ENCODE measurements at regions of chr3 and their contacts with region 1.

Region 1: DNA sequence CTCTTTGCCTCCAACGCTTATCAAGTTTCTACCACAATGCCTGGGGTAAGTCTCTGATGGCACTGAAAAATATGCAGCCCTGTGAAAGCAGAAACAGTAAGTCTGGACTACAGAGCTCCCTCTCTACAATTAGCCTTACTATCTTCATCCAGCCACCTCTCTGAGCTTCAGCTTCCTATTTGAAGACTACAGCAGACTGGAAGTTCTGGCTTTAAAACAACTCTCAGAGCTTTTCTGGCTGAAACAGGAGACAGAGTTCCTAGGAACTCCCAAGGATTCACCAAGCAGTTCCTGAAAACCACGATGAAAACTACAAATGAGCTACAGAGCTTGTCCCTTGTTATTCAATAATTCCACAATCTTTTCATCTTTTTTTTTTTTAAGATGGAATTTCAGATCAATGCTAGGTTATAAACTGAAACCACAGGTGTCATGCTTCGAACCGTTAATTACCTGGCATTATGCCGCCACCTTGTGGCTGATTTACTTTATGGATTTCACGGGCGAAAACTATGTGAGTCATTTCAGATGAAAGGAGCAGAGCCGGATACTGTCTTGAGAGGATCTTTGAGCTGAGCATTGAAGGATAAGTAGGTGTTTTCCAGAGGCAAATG is 3.9 kb downstream of the CRYGS start:
- DNase-seq: peak; percentile 90
- H3K4me3 Mint-ChIP-seq: no peak overlapping the region
- H3K27ac Mint-ChIP-seq: peak overlapping the region; percentile 25
- H3K4me1 Mint-ChIP-seq: peaks cover 57% of the 10 kb centered on the region
- H3K27me3 Mint-ChIP-seq: no peaks in the 10 kb centered on the region

Region 2: GRCh38 chr3:185976977-185977678 is 563.2 kb before region 1 on chr3:
- CTCF ChIA-PET with region 1: interaction called, 82 read pairs
- POLR2A ChIA-PET with region 1: no interaction called
- intact Hi-C with region 1: loop called (anchors 1 kb)
- DNase-seq: peak; percentile 92
- H3K4me3 Mint-ChIP-seq: no peak overlapping the region
- H3K27ac Mint-ChIP-seq: peak overlapping the region; percentile 23
- H3K4me1 Mint-ChIP-seq: peaks cover 15% of the 10 kb centered on the region
- H3K27me3 Mint-ChIP-seq: no peaks in the 10 kb centered on the region

Region 3: GRCh38 chr3:186241910-186242821 is 298.2 kb before region 1 on chr3:
- CTCF ChIA-PET with region 1: interaction called, 17 read pairs
- POLR2A ChIA-PET with region 1: no interaction called
- intact Hi-C with region 1: no loop called
- DNase-seq: peak; percentile 82
- H3K4me3 Mint-ChIP-seq: no peak overlapping the region
- H3K27ac Mint-ChIP-seq: no peak overlapping the region
- H3K4me1 Mint-ChIP-seq: peaks cover 7% of the 10 kb centered on the region
- H3K27me3 Mint-ChIP-seq: peaks cover 22% of the 10 kb centered on the region

Region 4: DNA sequence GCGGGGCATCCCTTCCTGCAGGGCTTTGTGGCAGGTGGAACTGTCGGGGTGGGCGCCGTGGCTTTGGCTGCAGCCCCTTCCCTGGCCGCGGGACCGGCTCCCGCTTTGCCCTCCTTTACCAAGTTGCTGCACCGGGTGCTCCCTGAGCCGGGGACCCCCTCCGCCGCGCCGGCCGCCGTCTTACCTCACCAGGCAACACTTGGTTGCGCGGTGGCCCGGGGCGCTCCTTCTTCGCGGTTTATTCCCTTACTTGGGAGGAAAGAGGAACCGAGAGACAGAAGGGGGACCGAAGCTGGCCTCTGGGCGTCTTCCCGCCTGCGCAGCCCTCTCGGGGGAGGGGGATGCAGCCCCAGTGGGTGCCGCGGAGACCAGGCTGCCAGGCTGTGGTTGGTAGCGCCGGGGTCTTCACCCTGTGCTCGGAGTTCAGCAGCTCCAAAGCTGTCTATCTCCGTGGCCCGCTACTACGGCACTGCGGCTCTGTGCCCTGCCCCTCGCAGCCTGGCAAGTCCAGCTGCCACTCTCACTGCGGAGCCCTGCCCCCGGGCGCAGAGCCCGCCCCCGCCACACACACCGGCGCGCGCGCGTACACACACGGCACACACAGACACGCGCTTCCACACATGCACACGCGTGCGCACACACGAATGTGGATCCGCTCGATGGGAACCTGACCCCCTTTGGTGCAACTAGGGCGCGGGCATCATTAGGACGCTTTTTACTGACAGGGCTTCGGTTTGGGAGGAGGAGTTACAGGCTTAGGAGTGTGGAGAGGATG is 178.4 kb before region 1 on chr3 and contains the start of gene DGKG:
- CTCF ChIA-PET with region 1: interaction called, 11 read pairs
- POLR2A ChIA-PET with region 1: no interaction called
- intact Hi-C with region 1: loop called (anchors 5 kb)
- DNase-seq: peak; percentile 47
- H3K4me3 Mint-ChIP-seq: peak within 1 kb of the TSS; percentile 50
- H3K27ac Mint-ChIP-seq: no peak within 1 kb of the TSS
- H3K4me1 Mint-ChIP-seq: peaks cover 8% of the 10 kb centered on the region
- H3K27me3 Mint-ChIP-seq: peaks cover 42% of the 10 kb centered on the region
- total RNA-seq, gene DGKG: 0.12 to 0.39 TPM

Region 5: GRCh38 chr3:186514296-186515002 is 25.9 kb before region 1 on chr3:
- CTCF ChIA-PET with region 1: interaction called, 50 read pairs
- POLR2A ChIA-PET with region 1: interaction called, 39 read pairs
- intact Hi-C with region 1: loop called (anchors 1 kb)
- DNase-seq: peak; percentile 72
- H3K4me3 Mint-ChIP-seq: no peak overlapping the region
- H3K27ac Mint-ChIP-seq: peak overlapping the region; percentile 81
- H3K4me1 Mint-ChIP-seq: peaks cover 96% of the 10 kb centered on the region
- H3K27me3 Mint-ChIP-seq: no peaks in the 10 kb centered on the region

Region 6: DNA sequence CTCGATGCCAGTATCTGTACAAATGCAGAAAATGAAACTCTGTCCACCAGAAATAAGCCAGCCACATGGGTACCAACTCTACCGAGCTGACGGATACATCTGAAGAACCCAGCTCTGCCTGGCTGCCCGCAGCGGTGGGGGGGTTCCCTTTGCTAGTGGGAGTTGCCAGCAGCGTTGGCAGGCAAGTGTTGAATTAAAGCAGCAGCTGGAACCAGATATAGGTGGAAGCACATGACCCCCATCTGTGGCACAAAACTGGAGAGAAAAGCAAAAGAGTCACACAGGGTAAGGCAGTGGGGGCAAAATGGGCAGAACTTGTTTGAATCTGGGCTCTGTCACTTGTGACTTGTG is 14.1 kb before region 1 on chr3:
- CTCF ChIA-PET with region 1: interaction called, 17 read pairs
- POLR2A ChIA-PET with region 1: interaction called, 12 read pairs
- intact Hi-C with region 1: no loop called
- DNase-seq: no peak
- H3K4me3 Mint-ChIP-seq: no peak overlapping the region
- H3K27ac Mint-ChIP-seq: no peak overlapping the region
- H3K4me1 Mint-ChIP-seq: peaks cover 46% of the 10 kb centered on the region
- H3K27me3 Mint-ChIP-seq: no peaks in the 10 kb centered on the region

Region 7: GRCh38 chr3:187041362-187042307 is 501.3 kb after region 1 on chr3:
- CTCF ChIA-PET with region 1: no interaction called
- POLR2A ChIA-PET with region 1: no interaction called
- intact Hi-C with region 1: no loop called
- DNase-seq: peak; percentile 70
- H3K4me3 Mint-ChIP-seq: peak overlapping the region; percentile 47
- H3K27ac Mint-ChIP-seq: peak overlapping the region; percentile 92
- H3K4me1 Mint-ChIP-seq: peaks cover 82% of the 10 kb centered on the region
- H3K27me3 Mint-ChIP-seq: no peaks in the 10 kb centered on the region